Esophagus muscularis mucosa (tissue), 4 donors: ENCODE measurements at regions of chr11 and their contacts with region 1.

Region 1: GRCh38 chr11:57249384-57250319 is 12.6 kb upstream of the APLNR start:
- DNase-seq: no peak
- H3K4me3 ChIP-seq: peak overlapping the region in 1 of 4 donors; percentile 31
- H3K27ac ChIP-seq: peak overlapping the region; percentile 1 to 50 (median 26)
- H3K4me1 ChIP-seq: peaks cover 12 to 21% (median 16%) of the 10 kb centered on the region in 4 donors
- H3K27me3 ChIP-seq: no peaks in the 10 kb centered on the region
- CTCF ChIP-seq: peak; percentile 76 to 78 (median 77)
- EP300 ChIP-seq: no peak
- POLR2A ChIP-seq: no peak

Region 2: GRCh38 chr11:56841210-56841810 is 408.3 kb before region 1 on chr11:
- intact Hi-C with region 1: loop called (anchors 1 kb)
- DNase-seq: no peak
- H3K4me3 ChIP-seq: no peak overlapping the region
- H3K27ac ChIP-seq: no peak overlapping the region
- H3K4me1 ChIP-seq: peaks cover 0 to 4% (median 0%) of the 10 kb centered on the region in 4 donors
- H3K27me3 ChIP-seq: peaks cover 0 to 15% (median 2%) of the 10 kb centered on the region in 4 donors
- CTCF ChIP-seq: peak; percentile 58 to 67 (median 64)
- EP300 ChIP-seq: no peak
- POLR2A ChIP-seq: no peak

Region 3: DNA sequence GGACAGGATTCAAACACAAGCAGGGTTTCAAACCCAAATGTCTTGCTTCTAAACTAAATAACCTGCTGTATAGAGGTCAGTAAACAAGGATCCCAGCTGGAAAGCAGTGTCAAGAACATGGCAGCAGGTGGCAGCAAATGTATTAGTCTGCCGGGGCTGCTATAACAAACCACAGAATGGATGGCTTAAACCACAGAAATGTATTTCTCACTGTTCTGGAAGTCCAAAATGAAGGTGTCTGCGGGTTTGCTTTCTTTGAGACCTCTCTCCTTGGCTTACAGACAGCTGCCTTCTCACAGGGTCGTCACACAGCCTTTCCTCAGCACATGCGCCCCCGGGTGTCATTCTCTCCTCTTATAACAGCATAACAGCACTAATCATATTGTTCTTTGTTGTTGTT is 133.0 kb before region 1 on chr11:
- intact Hi-C with region 1: loop called (anchors 5 kb)
- DNase-seq: no peak
- H3K4me3 ChIP-seq: no peak overlapping the region
- H3K27ac ChIP-seq: no peak overlapping the region
- H3K4me1 ChIP-seq: no peaks in the 10 kb centered on the region
- H3K27me3 ChIP-seq: no peaks in the 10 kb centered on the region
- CTCF ChIP-seq: peak; percentile 39 to 57 (median 53)
- EP300 ChIP-seq: no peak
- POLR2A ChIP-seq: no peak

Region 4: GRCh38 chr11:57131080-57131790 is 118.4 kb before region 1 on chr11:
- intact Hi-C with region 1: loop called (anchors 5 kb)
- DNase-seq: peak; percentile 55
- H3K4me3 ChIP-seq: no peak overlapping the region
- H3K27ac ChIP-seq: no peak overlapping the region
- H3K4me1 ChIP-seq: no peaks in the 10 kb centered on the region
- H3K27me3 ChIP-seq: no peaks in the 10 kb centered on the region
- CTCF ChIP-seq: peak; percentile 30 to 56 (median 37)
- EP300 ChIP-seq: no peak
- POLR2A ChIP-seq: no peak